Adrenal gland (tissue), 19 donors: ENCODE measurements at regions of chr16 and their contacts with region 1.

Region 1: GRCh38 chr16:47141773-47142485 is 1.8 kb downstream of the NETO2 start:
- DNase-seq: peak; percentile 81 to 92 (median 87)
- H3K4me3 ChIP-seq: peak overlapping the region in 2 of 4 donors; percentile 30 to 78
- H3K27ac ChIP-seq: no peak overlapping the region
- H3K4me1 ChIP-seq: no peaks in the 10 kb centered on the region
- H3K27me3 ChIP-seq: no peaks in the 10 kb centered on the region
- CTCF ChIP-seq: peak; percentile 76 to 92 (median 90)
- POLR2A ChIP-seq: no peak

Region 2: DNA sequence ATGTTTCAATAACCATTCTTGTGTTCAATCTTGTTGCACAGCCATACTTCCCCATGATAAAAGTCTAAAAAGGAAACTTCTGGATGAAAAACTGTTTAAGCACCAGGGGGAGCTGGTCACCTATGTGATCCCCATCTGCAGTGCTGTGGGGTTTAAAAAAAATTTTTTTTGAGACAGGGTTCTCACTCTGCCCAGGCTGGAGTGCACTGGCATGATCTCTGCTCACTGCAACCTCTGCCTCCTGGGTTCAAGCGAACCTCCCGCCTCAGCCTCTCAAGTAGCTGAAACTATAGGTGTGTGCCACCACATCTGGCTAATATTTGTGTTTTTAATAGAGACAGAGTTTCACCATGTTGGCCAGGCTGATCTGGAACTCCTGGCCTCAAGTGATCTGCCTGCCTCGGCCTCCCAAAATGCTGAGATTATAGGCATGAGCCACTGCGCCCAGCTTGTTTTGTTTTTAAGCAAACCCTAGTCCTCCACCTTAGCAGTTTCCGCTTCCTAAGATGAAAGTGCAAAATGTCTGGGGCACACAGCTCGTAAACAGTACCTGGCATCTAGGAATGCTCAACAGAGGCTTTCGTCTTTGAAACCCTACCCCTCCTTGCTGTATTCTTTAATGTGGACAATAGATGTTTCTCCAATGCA is 193.9 kb before region 1 on chr16:
- intact Hi-C with region 1: loop called in 1 of 2 experiments (anchors 10 kb)
- DNase-seq: peak in 4 of 7 donors; percentile 28 to 55 (median 38)
- H3K4me3 ChIP-seq: no peak overlapping the region
- H3K27ac ChIP-seq: no peak overlapping the region
- H3K4me1 ChIP-seq: no peaks in the 10 kb centered on the region
- H3K27me3 ChIP-seq: no peaks in the 10 kb centered on the region
- CTCF ChIP-seq: peak; percentile 42 to 70 (median 62)
- POLR2A ChIP-seq: no peak

Region 3: DNA sequence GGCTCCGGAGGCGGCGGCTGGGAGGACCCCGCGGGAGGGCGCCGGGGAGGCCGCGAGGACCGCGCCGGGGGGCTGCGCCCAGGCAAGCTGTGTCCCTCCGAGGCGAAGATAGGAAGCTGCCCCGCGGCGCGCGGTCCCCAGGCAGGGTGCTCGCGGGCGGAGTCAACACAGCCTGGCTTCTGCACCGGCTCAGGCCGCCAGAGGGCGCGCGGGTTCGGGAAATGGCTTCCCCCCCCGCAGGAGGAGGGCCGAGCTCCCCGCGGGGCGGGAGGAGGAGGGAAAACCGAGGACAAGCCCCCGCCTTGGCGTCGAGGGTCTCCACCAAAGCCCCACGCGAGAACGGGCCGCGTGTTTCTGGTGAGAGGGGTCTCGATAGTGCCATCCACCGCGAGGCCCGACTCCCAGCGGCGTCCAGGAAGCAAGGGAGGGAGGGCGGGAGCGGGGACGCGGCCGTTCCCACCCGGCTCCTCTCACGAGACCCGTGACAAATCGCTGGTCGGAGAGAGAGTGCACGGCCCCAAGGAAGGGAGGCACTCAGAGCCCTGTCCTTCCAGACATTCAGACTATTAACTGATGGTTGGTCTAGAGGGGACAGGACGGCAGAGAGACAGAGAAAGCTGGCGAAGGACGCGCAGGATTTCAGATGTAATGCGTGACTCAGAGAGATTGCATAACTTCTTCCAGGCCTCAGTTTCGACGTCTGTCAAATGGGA is 104.0 kb before region 1 on chr16:
- intact Hi-C with region 1: loop called (anchors 5 to 10 kb)
- DNase-seq: peak; percentile 84 to 93 (median 92)
- H3K4me3 ChIP-seq: peak overlapping the region; percentile 3 to 65 (median 40)
- H3K27ac ChIP-seq: peak overlapping the region in 2 of 5 donors; percentile 54 to 70
- H3K4me1 ChIP-seq: peaks cover 0 to 6% of the 10 kb centered on the region in 2 donors
- H3K27me3 ChIP-seq: no peaks in the 10 kb centered on the region
- CTCF ChIP-seq: peak; percentile 85 to 95 (median 93)
- POLR2A ChIP-seq: no peak

Region 4: GRCh38 chr16:47492428-47493377 is 350.8 kb after region 1 on chr16:
- intact Hi-C with region 1: no loop called
- DNase-seq: peak; percentile 47 to 80 (median 64)
- H3K4me3 ChIP-seq: peak overlapping the region in 1 of 4 donors; percentile 25
- H3K27ac ChIP-seq: peak overlapping the region in 3 of 5 donors; percentile 26 to 70 (median 61)
- H3K4me1 ChIP-seq: no peaks in the 10 kb centered on the region
- H3K27me3 ChIP-seq: no peaks in the 10 kb centered on the region
- CTCF ChIP-seq: no peak
- POLR2A ChIP-seq: no peak

Region 5: DNA sequence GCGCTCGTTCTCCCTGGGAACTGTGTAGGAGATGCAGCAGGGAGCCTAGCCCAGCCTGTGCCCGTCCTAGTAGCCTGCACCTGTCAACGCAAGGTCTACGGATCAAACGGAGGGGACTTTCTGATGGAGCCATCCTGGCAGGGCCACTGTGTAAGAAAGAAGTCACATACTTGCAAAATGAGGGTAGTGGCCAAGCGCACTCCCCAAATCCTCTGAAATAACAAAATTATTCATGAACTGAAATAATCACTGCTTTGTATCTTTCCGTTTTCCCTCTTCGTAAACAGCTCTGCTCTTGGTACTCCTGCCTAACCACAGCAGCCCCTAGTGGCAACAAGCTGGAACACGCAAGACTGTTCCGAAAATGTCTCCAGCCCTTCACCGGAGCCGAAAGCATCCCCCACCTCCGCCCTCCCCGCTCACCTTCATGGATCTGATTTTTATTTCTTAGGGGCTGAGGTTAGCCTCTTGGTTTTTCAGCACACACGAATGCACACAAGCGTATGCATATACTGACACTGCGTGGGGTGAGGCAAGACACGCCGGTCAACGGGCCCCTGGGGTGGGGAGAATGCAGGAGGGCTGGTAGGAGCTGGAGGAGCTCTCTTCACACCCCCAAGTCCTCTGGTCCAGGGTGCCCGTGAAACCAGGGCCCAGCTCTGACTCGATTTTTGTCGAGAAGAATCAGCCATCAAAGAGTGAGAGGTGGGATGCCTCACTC is 913.1 kb after region 1 on chr16:
- intact Hi-C with region 1: loop called (anchors 5 to 10 kb)
- DNase-seq: peak; percentile 46 to 78 (median 63)
- H3K4me3 ChIP-seq: peak overlapping the region in 1 of 4 donors; percentile 36
- H3K27ac ChIP-seq: no peak overlapping the region
- H3K4me1 ChIP-seq: peaks cover 7 to 9% of the 10 kb centered on the region in 2 donors
- H3K27me3 ChIP-seq: no peaks in the 10 kb centered on the region
- CTCF ChIP-seq: peak; percentile 71 to 86 (median 80)
- POLR2A ChIP-seq: no peak

Region 6: DNA sequence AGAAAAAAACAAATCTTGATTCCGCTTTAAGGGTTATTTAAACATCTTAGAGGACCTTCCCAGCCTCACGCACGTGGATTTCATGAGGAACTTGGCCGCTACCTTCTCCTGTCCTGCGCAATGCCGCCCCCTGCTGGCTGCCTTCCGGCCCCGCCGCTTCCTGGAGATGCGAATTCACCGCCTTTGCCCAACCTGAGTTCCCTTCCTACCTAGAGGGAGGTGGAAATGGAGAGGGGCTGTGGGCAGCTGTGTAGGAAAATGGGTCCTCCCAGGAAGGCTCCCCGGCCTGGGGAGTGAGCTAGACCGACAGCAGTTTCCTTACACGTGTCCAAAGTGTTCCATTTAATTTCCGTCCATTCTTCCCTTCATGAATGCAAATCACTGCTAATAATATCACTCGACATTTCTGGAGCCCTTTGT is 1014.9 kb after region 1 on chr16:
- intact Hi-C with region 1: loop called (anchors 5 to 10 kb)
- DNase-seq: peak; percentile 75 to 91 (median 84)
- H3K4me3 ChIP-seq: no peak overlapping the region
- H3K27ac ChIP-seq: no peak overlapping the region
- H3K4me1 ChIP-seq: no peaks in the 10 kb centered on the region
- H3K27me3 ChIP-seq: no peaks in the 10 kb centered on the region
- CTCF ChIP-seq: peak; percentile 83 to 96 (median 90)
- POLR2A ChIP-seq: no peak